BJ (cell line): ENCODE measurements at regions of chr6 and their contacts with region 1.

Region 1: DNA sequence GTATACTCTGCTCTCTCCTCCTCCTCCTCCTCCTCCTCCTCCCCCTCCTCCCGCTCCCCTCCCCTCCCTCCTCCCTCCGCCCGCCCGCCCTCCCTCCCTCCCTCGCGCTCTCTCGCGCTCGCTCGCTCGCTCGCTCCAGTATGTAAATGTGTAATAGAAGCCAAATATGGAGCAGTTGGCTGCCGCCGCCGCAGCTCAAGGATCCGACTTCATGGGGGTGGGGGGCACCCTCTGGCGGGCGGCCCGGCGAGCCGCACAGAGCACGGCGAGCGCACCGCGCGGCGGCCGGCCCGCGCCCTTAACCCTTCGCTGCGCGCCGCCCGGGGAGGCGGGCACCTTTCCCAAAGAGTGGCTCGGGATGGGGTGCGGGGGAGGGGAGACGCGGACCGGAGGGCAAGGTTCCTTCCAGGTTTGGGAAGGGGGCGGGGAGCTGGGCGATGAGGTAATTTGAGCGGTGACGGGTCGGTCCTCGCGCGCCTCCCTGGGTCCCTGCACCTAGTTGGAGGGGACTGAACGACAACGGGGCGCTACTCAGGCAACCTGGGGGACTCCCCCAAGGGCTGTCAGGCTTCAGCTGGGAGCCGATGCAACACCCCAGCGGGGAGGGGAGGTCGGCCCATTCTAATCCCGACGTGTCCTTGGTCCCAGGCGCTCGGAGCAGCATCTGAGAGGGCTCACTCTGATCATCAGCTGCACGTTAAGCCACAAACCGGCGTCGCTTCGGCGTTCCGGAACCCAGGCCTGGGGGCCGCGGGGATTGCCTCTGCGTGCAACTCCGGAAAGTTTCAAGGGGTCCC is 409 bp upstream of the ATXN1 start:
- DNase-seq: no peak
- H3K4me3 ChIP-seq: peak overlapping the region; percentile 88
- H3K27me3 ChIP-seq: no peaks in the 10 kb centered on the region
- CTCF ChIP-seq: no peak

Region 2: DNA sequence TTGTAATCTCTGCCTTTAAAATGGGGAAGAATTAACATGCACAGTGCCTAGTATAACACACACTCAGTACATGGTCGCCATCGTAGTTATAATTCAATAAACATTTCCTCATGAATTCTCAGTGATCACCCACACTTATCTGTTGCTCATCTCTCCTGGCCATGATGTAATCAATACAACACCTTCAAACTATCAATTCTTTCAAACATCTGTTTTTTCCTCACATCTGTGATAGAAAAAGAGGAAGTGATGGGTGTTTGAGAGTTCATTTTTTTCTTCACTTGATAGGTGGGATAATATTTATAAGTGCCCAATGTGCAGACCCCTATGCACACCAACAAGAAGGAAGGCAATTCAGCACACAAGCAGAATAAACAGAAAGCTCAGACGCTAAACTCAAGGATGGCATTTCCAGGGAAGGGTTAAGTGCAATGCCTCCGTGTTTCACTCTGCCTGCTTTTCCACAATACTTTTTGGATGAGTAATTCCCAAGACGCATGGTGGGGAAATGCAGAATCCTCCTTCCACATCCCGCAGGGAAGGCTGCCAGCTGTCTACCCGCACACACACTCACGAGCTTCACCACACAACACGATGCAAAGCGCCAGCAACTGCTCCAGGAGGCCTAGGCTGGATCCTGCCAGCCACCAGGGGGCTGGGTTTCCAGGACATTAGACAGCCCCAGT is 422.9 kb before region 1 on chr6:
- CTCF ChIA-PET with region 1: interaction called, 18 read pairs
- POLR2A ChIA-PET with region 1: no interaction called
- DNase-seq: peak; percentile 98
- H3K4me3 ChIP-seq: no peak overlapping the region
- H3K27me3 ChIP-seq: no peaks in the 10 kb centered on the region
- CTCF ChIP-seq: peak; percentile 86

Region 3: DNA sequence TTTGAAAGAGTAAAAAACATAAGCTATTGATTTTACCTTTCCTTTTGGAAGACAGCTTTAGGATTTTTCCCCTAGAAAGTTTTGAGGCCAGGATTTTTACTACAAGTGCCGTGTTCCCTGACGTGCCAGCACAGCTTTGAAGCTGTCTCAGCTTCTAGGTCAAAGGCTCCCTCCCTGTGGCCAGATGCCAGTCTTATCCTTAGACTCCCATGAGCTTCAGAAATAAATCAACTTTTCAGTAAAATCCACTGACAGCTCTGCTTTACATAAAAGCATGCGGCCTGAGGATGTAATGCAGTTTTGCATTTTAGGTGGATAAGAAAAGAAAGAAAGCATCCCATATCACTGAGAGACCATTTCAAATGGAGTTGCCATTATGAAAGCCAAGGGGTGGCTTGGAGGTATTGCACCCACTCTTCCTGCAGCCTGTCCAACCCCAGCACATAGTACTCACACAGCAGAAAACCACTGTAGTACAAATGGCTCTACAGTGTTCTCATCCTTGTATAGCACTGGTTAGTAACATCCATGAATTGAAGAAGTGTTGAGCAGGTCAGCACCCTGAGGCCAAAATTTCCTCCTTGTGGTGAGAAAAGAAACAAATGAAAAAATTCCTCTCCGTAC is 14.8 kb after region 1 on chr6:
- CTCF ChIA-PET with region 1: no interaction called
- POLR2A ChIA-PET with region 1: no interaction called
- DNase-seq: no peak
- H3K4me3 ChIP-seq: no peak overlapping the region
- H3K27me3 ChIP-seq: no peaks in the 10 kb centered on the region
- CTCF ChIP-seq: peak; percentile 19; the same call in 1 of the 2 replicates

Region 4: GRCh38 chr6:16964553-16965501 is 203.2 kb after region 1 on chr6:
- CTCF ChIA-PET with region 1: interaction called, 76 read pairs
- POLR2A ChIA-PET with region 1: no interaction called
- DNase-seq: no peak
- H3K4me3 ChIP-seq: no peak overlapping the region
- H3K27me3 ChIP-seq: no peaks in the 10 kb centered on the region
- CTCF ChIP-seq: peak; percentile 95

Region 5: DNA sequence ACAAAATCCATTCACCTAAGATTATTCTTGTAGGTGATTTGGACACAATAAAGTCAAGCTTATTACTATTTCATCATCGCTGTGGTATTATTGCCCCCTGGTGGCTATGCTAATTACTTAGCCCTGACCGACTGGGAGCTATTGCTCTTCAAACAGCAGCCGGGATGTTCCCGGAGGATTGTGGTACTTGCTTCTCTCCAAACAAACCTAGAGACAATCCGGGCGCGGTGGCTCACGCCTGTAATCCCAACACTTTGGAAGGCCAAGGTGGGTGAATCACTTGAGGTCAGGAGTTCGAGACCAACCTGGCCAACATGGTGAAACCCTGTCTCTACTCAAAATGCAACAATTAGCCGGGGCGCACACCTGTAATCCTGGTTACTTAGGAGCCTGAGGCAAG is 324.8 kb after region 1 on chr6:
- CTCF ChIA-PET with region 1: interaction called, 92 read pairs
- POLR2A ChIA-PET with region 1: no interaction called
- DNase-seq: peak; percentile 40
- H3K4me3 ChIP-seq: no peak overlapping the region
- H3K27me3 ChIP-seq: no peaks in the 10 kb centered on the region; the same call in 1 of the 2 replicates
- CTCF ChIP-seq: peak; percentile 66

Region 6: DNA sequence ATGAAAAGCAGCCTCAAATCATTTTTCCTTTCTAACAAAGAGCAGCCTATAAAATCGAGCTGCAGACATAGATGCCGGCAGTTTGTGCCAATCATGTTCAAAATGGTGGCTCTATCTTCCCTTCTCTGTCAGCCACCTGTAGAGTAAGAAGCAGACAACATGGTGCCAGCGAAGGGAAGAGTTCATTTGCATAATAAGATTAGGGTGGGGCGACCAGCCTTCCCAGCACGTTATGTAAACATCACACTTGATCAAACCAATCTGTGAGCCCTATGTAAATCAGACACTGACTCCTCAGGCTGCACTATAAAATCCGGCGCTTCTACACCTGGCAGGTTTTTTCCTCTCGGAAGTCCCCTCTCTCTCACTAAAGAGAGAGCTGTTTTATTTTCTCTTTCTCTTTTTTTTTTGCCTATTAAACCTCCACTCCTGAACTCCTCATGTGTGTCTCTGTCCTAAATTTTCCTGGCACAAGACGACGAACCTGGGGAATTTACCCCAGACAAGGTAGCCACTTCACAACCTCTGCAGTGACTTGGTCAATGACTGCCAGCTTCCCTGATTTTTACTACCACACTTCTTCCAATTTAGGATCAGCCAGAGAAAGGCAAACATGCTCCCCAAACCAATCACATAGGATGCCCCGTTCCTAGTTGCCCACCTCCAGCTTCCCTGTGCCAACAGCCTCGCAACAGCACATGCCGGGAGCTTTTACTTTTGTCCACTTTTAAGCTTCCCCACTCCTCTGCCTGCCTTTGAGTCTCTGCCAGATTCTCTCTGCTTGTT is 1380.3 kb after region 1 on chr6:
- CTCF ChIA-PET with region 1: no interaction called
- POLR2A ChIA-PET with region 1: no interaction called
- DNase-seq: no peak
- H3K4me3 ChIP-seq: no peak overlapping the region
- H3K27me3 ChIP-seq: no peaks in the 10 kb centered on the region
- CTCF ChIP-seq: no peak